ENCODE measurements at regions of chr9 and their contacts with region 1.

Region 1: DNA sequence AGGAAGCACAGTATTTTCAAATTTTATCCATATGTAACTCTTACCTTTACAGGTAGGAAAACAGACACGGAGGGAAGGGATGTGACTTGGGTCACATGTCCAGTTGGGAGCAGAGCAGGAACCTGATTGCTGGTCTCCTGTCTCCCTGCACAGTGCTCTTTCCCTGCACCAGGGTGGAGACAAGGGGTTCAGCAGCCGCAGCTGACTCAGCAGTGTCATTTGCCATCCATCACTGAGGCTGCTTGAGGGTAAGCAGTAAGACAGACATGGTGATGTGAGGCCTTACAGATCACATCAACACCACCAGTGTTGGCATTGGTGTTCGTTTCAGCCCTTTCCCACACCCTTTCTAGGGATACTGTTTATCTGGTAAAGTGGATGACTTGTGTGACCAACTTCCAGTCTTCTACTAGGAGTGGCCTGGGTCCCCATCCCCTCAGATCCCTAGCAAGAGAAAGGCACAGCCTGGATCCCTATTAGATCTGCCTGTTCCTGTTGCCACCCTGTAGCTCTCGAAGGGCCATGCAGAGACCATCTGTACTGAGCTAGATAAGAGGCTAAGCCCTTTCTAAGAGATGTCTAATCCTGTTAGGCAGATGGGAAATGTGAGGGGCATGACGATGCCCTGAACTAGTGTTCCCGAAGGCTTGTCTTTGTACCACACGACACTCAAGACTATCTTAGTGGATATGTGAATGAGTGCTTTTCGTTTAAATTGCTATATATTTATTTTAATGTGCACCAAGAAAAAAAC is 29.1 kb downstream of the FRMPD1 start:
- DNase-seq: no peak
- ATAC-seq: no peak
- H3K4me3 ChIP-seq: no peak overlapping the region
- H3K27ac ChIP-seq: no peak overlapping the region
- H3K4me1 ChIP-seq: peaks cover 0 to 26% (median 0%) of the 10 kb centered on the region in 12 donors
- H3K27me3 ChIP-seq: no peaks in the 10 kb centered on the region
- CTCF ChIP-seq: no peak
- POLR2A ChIP-seq: no peak

Region 2: DNA sequence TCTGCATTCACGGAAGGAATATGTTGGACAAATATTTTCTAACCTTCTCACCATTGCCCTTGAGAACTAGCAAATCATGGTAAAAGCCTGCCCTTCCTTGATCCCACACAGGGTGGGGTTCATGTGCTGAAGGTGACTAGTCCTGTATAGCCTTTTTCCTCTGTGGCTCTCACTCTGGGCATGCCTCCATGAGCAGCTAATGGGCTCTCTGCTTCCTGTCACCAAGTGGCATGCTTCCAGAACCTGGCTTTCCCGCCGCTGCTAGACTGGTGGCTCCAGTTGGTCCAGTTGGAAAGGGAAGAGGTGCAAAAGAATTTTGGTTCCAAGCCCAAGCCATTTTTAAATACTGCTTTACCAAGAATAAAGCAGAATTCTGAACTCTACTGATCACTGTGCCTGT is 139.2 kb before region 1 on chr9:
- intact Hi-C with region 1: no loop called
- DNase-seq: peak in 4 of 5 donors; percentile 58 to 69 (median 66)
- ATAC-seq: peak; percentile 78 to 85 (median 84)
- H3K4me3 ChIP-seq: no peak overlapping the region
- H3K27ac ChIP-seq: no peak overlapping the region
- H3K4me1 ChIP-seq: peaks cover 0 to 9% (median 0%) of the 10 kb centered on the region in 12 donors
- H3K27me3 ChIP-seq: no peaks in the 10 kb centered on the region
- CTCF ChIP-seq: no peak
- POLR2A ChIP-seq: no peak

Region 3: GRCh38 chr9:37611014-37611413 is 68.8 kb before region 1 on chr9:
- intact Hi-C with region 1: no loop called
- DNase-seq: no peak
- ATAC-seq: no peak
- H3K4me3 ChIP-seq: no peak overlapping the region
- H3K27ac ChIP-seq: no peak overlapping the region
- H3K4me1 ChIP-seq: no peaks in the 10 kb centered on the region
- H3K27me3 ChIP-seq: peaks cover 0 to 6% (median 0%) of the 10 kb centered on the region in 9 donors
- CTCF ChIP-seq: no peak
- POLR2A ChIP-seq: no peak

Region 4: DNA sequence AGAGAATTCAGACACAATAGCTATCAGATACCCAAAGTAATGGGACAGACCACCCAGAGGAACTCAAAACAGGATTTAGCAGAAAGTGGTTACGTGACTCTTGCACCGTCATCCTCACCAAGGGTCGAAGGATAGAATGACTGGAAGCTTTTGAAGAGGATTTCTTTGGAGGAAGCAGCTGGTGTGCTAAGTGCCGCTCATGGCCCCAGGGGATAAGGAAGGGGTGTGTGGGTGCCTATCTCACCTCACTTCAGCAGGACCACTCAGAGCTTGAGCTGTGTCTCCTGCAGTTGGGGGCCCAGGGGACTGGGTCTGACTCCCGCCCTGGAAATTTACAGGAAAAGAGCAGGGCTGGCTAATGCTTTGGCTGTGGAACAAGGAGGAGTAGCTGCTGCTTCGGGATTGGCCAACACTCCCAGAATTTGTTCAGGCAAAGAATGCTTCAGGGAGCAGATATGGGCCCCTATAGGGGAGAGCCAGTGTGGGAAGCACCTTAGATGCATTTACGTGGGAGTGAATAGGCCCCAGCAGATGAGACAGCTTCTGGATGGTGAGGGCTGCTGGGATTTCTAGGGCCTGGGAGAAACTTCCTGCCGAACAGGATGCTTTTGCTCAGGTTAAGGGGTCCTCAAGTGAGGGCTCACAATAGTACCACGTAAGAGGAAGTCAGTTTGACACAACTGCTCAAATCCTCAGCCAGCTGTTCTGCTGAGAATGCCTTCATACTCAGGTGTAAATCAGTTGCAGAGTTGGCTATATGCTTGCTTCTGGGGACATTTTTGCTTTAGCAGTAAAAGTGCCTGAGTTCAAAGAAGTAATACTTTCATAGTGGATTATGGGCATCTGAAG is 58.3 kb before region 1 on chr9:
- intact Hi-C with region 1: loop called in 1 of 10 experiments (anchors 10 kb)
- DNase-seq: no peak
- ATAC-seq: peak in 1 of 4 donors; percentile 50
- H3K4me3 ChIP-seq: no peak overlapping the region
- H3K27ac ChIP-seq: no peak overlapping the region
- H3K4me1 ChIP-seq: no peaks in the 10 kb centered on the region
- H3K27me3 ChIP-seq: no peaks in the 10 kb centered on the region
- CTCF ChIP-seq: no peak
- POLR2A ChIP-seq: no peak

Region 5: DNA sequence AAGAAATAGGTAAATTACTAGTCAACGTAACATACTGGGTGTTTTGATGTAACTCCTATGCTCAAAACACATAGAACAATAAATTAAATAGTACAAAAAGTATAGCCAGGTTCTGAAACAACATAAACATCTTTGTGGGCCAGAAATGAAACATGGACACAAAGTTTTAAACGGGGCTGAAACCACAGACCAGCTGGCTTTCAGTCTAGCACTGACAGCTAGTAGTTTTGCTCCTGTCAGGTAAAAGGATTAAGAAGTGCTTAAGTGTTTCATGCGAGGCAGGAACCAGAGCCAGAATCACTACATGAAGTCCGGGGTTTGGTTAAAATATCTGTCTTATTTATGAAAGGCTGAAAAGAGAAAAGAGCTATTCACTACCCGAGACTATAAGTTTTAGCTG is 140.3 kb after region 1 on chr9:
- intact Hi-C with region 1: no loop called
- DNase-seq: no peak
- ATAC-seq: no peak
- H3K4me3 ChIP-seq: no peak overlapping the region
- H3K27ac ChIP-seq: no peak overlapping the region
- H3K4me1 ChIP-seq: no peaks in the 10 kb centered on the region
- H3K27me3 ChIP-seq: no peaks in the 10 kb centered on the region
- CTCF ChIP-seq: no peak
- POLR2A ChIP-seq: no peak

Region 6: DNA sequence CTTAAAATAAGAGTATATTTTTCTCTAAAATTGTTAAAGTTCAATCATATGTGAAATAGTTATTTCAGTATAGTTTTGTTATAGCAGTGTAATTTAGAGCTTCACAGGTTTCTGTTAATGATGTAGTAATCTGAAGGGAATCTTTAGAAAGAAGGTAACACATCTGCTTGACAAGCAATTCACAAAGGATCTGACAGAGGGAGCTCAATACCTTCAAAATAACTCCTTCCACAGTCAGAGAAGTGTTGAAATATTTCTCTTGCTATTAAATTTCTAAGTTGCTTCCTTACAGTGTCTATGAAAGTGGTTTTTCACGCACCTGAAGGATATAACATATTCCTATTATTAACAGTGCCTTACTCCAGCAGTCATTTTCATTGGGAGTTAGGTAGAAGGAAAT is 179.2 kb after region 1 on chr9:
- intact Hi-C with region 1: no loop called
- DNase-seq: no peak
- ATAC-seq: no peak
- H3K4me3 ChIP-seq: no peak overlapping the region
- H3K27ac ChIP-seq: no peak overlapping the region
- H3K4me1 ChIP-seq: no peaks in the 10 kb centered on the region
- H3K27me3 ChIP-seq: no peaks in the 10 kb centered on the region
- CTCF ChIP-seq: peak in 1 of 12 donors; percentile 7
- POLR2A ChIP-seq: no peak

Measured in heart left ventricle (tissue), 16 donors.